ENCODE measurements at regions of chr17 and their contacts with region 1.

Region 1: DNA sequence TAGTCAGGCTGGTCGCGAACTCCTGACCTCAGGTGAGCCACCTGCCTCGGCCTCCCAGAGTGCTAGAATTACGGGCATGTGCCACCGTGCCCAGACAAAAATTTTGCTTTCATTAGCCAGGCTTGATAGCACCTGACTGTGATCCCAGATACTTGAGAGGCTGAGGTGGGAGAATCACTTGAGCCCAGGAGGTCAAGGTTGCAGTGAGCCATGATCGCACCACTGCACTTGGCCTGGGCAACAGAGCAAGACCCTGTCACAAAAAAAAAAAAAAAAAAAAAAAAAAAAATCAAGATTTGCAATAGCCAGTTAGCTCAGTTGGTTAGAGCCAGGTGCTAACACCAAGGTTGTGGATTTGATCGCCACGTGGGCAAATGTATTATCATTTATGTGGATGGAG is 6.1 kb upstream of the FXR2 start:
- DNase-seq: no peak
- ATAC-seq: no peak
- H3K4me3 Mint-ChIP-seq: no peak overlapping the region
- H3K27ac Mint-ChIP-seq: no peak overlapping the region
- H3K4me1 Mint-ChIP-seq: no peaks in the 10 kb centered on the region
- H3K27me3 Mint-ChIP-seq: no peaks in the 10 kb centered on the region
- CTCF ChIP-seq: no peak

Region 2: GRCh38 chr17:7794075-7794663 is 173.3 kb after region 1 on chr17:
- CTCF ChIA-PET with region 1: no interaction called
- POLR2A ChIA-PET with region 1: interaction called, 12 read pairs
- intact Hi-C with region 1: no loop called
- DNase-seq: no peak
- ATAC-seq: no peak
- H3K4me3 Mint-ChIP-seq: no peak overlapping the region
- H3K27ac Mint-ChIP-seq: no peak overlapping the region
- H3K4me1 Mint-ChIP-seq: no peaks in the 10 kb centered on the region
- H3K27me3 Mint-ChIP-seq: peaks cover 10% of the 10 kb centered on the region
- CTCF ChIP-seq: no peak

Measured in activated B cell treated with CpG ODN at 0.5 μM for 24 hours (primary cell).